Posterior vena cava (tissue), 2 donors: ENCODE measurements at regions of chr11 and their contacts with region 1.

Region 1: DNA sequence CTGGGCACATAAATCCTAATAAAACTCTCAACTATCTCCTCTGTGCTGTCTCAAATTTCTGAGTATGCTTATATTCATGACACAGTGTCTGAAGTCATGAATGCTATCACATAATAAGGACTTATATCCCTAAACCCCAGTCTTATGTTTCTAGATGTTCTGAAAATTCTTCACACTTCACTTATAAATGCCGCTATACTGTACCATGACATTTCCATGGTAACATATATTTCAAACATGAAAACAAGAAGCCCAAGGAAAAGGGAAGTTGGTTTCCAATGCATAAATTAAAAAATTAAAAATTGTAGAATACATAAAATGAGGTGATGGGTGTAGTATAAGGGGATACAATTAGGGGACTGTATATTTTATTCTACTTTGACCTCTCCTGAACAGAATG is 11.7 kb downstream of the GVQW3 start:
- DNase-seq: no peak

Region 2: DNA sequence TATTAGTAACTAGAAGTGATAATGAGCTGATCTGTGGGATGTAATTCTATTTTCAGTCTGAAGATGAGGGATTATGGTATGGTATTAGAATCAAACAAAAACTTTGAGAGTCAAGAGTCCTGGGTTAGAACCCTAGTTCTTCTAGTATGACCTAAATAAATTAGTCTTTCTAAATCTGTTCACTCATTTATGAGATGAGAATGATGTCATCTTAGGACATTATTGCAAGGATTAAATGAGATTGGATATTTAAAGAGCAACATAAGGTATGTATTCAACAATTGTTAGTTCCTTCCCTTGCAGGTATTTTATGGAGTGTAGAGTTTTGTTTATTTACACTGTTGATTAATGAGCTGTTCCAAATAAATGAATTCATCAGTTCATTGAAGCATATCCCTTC is 73.8 kb after region 1 on chr11:
- intact Hi-C with region 1: loop called in 1 of 2 experiments (anchors 2 kb)
- DNase-seq: no peak